ENCODE measurements at regions of chr13 and their contacts with region 1.

Region 1: GRCh38 chr13:24328145-24328544 is 18.8 kb downstream of the C1QTNF9 start:
- DNase-seq: no peak
- ATAC-seq: no peak
- H3K4me3 ChIP-seq: peak overlapping the region in 3 of 12 donors; percentile 9 to 29 (median 12)
- H3K27ac ChIP-seq: no peak overlapping the region
- H3K4me1 ChIP-seq: no peaks in the 10 kb centered on the region
- H3K27me3 ChIP-seq: peaks cover 0 to 19% (median 6%) of the 10 kb centered on the region in 9 donors
- CTCF ChIP-seq: no peak
- POLR2A ChIP-seq: no peak

Region 2: GRCh38 chr13:23888658-23889614 is 439.2 kb before region 1 on chr13 and contains the start of gene MIPEP:
- intact Hi-C with region 1: loop called in 2 of 10 experiments (anchors 5 to 10 kb)
- DNase-seq: peak; percentile 94 to 97 (median 94)
- ATAC-seq: peak; percentile 98 to 99 (median 98)
- H3K4me3 ChIP-seq: peak within 1 kb of the TSS; percentile 67 to 100 (median 93)
- H3K27ac ChIP-seq: peak within 1 kb of the TSS; percentile 51 to 92 (median 84)
- H3K4me1 ChIP-seq: peaks cover 0 to 26% (median 10%) of the 10 kb centered on the region in 12 donors
- H3K27me3 ChIP-seq: no peaks in the 10 kb centered on the region
- CTCF ChIP-seq: peak; percentile 60 to 95 (median 76)
- POLR2A ChIP-seq: peak; percentile 13 to 68
- total RNA-seq, gene MIPEP: 21.5 to 88.1 (median 42.1) TPM

Region 3: DNA sequence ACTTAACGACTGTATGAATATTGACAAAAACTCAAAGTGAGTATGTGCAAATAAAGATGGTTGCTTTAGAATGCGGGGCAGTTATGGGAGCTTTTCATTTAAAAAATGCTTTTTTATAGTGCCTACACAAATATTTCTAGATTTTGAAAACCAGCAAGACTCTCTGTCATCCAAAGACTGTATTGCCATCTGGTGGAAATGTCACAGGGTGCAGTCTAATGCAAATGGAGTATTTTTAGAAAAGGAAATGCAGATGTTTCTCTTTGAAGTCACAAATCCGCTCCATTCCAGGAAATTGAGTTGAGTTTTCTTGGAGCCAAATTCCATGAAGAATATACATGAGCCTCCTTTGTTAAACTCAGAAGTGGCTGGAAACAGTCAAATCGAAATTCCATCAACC is 428.6 kb before region 1 on chr13:
- intact Hi-C with region 1: loop called in 2 of 10 experiments (anchors 5 to 10 kb)
- DNase-seq: peak in 1 of 5 donors; percentile 38
- ATAC-seq: peak in 3 of 4 donors; percentile 40 to 58 (median 49)
- H3K4me3 ChIP-seq: no peak overlapping the region
- H3K27ac ChIP-seq: no peak overlapping the region
- H3K4me1 ChIP-seq: peaks cover 0 to 16% (median 9%) of the 10 kb centered on the region in 12 donors
- H3K27me3 ChIP-seq: peaks cover 3 to 32% (median 20%) of the 10 kb centered on the region in 9 donors
- CTCF ChIP-seq: peak; percentile 25 to 75 (median 54)
- POLR2A ChIP-seq: no peak